ENCODE measurements at regions of chr3 and their contacts with region 1.

Region 1: DNA sequence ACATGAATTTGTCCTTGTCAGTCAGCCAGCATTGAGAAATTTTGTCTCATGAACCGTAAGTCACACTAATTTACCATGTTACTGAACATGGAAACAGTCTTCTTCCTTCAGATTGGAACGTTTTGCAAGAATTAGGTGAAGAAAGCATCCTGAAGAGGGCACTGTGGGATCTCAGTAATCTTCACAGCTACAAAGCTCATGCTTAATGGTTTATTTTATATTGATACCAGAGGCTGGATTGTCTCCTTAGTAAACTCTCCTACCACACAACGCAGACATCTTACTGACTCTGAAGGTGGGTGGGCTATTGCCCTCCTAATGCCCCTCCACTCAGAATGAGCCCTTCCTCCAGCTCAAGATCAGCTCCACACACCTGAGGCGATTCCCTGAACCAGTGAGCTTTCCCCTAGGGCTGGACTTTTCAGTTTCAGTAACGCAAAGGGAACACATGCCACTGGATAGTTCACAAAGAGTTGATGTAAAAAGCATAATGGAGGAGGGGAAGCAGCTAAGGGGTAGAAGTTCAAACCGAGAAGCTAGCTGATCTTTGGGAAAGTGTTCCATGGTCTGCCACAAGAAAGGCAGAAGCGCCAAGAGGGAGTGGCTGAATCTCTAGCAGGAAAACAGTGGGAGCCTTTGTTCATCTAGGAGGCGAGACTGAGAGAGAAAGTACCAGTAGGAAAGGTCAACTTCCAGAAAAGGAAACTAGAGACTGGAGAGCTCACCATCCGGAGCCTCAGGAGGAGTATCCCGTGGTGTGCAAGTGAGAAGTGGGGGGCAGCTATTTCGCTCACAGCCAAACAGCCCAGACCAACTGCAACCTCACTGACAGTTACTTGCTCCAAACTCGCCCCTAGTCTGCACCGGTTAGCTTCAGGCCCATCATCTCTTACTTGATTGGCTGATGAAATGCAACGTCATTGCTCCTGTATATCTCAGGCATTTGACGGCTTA is at the start of gene SLC9C1:
- DNase-seq: peak; percentile 65
- H3K4me3 Mint-ChIP-seq: peak within 1 kb of the TSS; percentile 53
- H3K27ac Mint-ChIP-seq: peak within 1 kb of the TSS; percentile 77
- H3K4me1 Mint-ChIP-seq: peaks cover 35% of the 10 kb centered on the region
- H3K27me3 Mint-ChIP-seq: no peaks in the 10 kb centered on the region

Region 2: DNA sequence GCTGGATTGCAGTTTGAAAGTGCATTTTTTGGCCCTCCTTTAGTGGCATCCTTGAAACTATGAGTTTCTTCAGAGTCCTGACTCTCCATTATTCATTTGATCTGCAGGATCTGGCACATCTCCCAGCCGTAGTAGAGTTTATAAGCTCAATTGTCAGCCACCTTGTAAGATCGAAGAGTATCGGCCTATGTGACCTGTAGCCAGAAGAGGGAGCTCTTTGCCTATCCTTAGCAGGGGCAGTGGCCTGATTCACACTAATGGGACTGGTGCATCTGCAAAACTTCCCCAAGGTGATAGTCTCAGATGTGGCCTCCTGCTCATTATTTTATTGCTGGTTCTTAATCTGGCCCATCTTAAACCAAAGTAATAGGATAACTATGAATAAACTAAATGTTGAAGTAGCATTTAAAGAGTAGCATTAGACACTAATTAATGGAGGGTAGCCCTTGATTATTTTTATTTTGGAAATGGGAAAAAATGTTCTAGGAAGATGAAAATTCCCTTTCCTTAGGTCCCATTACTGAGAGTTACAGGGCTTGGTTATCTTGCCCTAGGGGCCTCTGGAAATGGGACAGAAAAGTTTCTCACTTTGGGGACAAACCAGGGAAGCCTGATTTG is 181.8 kb before region 1 on chr3:
- CTCF ChIA-PET with region 1: interaction called, 40 read pairs
- DNase-seq: peak; percentile 77
- H3K4me3 Mint-ChIP-seq: no peak overlapping the region
- H3K27ac Mint-ChIP-seq: no peak overlapping the region
- H3K4me1 Mint-ChIP-seq: peaks cover 14% of the 10 kb centered on the region
- H3K27me3 Mint-ChIP-seq: no peaks in the 10 kb centered on the region

Region 3: DNA sequence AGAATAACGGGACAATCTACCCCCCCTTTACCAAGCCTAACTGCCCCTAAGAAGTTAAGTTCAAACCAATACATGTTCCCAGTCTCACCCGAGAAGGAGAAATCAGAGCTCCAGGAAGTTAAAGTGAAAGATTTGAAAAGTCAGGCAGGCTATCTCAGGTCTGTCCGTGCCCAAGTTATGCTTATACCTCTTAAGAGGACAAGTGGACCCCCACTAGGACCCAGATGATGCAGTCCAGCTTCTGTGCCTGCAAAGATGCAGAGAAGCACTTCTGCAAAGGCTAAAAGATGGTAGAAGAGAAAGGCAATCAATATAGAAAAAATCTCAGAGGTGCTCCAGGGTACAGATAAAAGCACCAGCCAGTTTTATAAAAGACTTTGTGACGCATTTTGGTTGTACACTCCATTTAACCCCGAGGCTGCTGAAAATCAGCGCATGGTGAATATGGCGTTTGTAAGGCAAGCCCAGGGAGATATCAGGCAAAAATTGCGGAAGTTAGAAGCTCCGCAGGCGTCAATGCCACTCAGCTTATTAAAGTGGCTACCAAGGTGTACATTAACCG is 10.2 kb after region 1 on chr3:
- CTCF ChIA-PET with region 1: interaction called, 32 read pairs
- DNase-seq: peak; percentile 38
- H3K4me3 Mint-ChIP-seq: no peak overlapping the region
- H3K27ac Mint-ChIP-seq: no peak overlapping the region
- H3K4me1 Mint-ChIP-seq: peaks cover 5% of the 10 kb centered on the region
- H3K27me3 Mint-ChIP-seq: no peaks in the 10 kb centered on the region

Region 4: DNA sequence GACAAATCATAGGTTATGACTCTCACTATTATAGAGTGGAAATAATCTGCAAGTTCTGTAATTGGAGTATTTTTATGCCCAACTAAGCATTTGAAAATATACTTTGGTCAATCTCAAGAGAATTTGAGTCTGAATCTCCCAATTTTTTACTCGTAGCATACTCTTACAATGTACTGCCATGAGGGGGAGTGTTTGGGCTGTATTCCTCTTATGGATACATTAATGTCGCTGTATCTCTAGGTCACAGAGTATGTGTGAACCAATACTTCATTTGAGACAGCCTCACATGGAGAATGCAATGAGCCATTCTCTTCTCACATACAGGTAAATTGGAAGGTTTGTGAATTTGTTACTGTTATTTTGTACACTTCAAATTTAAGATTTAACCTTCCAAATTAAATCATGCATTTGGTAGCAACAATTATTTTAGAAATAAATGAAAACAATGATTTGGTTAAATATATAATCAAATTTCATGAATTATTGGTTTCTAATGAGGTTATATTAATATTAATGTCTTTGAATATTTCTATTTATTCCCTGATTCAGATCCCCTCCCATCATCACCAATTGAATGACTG is 33.8 kb after region 1 on chr3:
- CTCF ChIA-PET with region 1: interaction called, 21 read pairs
- DNase-seq: peak; percentile 65
- H3K4me3 Mint-ChIP-seq: no peak overlapping the region
- H3K27ac Mint-ChIP-seq: no peak overlapping the region
- H3K4me1 Mint-ChIP-seq: peaks cover 12% of the 10 kb centered on the region
- H3K27me3 Mint-ChIP-seq: peaks cover 12% of the 10 kb centered on the region

Region 5: DNA sequence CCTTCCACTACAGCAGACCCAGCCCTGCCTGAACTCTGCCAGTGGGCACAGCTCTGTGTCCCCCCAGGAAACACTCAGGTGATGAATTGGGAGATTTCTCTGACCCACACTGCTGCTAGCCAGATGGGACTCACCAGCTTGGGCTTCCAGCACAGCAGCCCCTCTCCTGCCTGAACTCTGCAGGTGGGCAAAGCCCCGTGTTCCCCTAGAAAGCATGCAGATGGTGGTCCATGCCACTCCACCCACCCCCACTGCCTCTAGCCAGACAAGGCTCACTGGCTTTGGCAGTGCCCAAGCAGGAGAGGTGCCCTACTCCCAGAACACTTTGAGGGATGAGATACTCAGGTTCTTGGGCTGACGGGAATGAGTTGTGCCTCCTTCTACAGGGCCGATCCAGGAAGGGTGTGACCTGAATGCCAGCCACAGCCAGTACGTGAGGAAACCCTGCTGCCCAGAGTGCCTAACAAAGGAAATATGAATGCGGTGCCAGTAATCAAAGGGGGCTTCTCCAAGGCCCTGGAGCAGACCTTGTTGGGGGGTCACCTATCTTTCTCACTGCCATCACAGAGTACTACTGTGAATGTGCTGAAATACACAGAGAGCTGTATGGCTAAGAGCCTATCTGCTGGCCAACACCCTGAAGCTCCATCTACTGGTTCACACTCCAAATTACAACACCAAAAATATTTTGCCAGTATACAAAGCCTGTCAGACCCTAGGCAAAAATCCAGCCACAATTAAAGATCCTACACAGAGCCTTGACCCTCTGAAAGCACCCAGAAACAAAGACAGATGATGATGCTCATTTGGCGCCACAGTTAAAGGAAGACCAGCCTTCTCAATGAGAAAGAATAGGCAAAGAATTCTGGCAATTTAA is 143.7 kb after region 1 on chr3:
- CTCF ChIA-PET with region 1: interaction called, 23 read pairs
- DNase-seq: peak; percentile 28
- H3K4me3 Mint-ChIP-seq: no peak overlapping the region
- H3K27ac Mint-ChIP-seq: peak overlapping the region; percentile 68
- H3K4me1 Mint-ChIP-seq: peaks cover 42% of the 10 kb centered on the region
- H3K27me3 Mint-ChIP-seq: no peaks in the 10 kb centered on the region

Region 6: DNA sequence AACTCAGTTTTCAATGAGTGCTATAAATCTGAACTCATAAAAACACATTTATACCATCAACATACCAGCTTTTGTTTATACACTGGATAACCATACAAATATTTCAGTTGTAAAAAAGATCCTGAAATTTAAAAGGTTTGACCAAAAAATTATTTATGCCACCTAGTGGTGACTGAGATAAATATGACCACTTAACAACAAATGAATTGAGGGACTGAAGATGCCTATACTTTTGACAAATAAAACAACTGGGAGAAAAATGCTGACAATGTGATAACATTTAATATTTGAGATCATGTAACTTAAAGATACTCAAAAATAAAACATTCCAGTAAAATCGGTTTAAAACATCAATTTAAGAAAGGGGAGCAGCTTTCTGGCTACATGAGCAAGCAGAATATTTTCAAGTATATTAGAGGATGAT is 237.7 kb after region 1 on chr3:
- CTCF ChIA-PET with region 1: interaction called, 15 read pairs
- DNase-seq: no peak
- H3K4me3 Mint-ChIP-seq: no peak overlapping the region
- H3K27ac Mint-ChIP-seq: no peak overlapping the region
- H3K4me1 Mint-ChIP-seq: no peaks in the 10 kb centered on the region
- H3K27me3 Mint-ChIP-seq: no peaks in the 10 kb centered on the region